ENCODE measurements at regions of chr3 and their contacts with region 1.

Region 1: DNA sequence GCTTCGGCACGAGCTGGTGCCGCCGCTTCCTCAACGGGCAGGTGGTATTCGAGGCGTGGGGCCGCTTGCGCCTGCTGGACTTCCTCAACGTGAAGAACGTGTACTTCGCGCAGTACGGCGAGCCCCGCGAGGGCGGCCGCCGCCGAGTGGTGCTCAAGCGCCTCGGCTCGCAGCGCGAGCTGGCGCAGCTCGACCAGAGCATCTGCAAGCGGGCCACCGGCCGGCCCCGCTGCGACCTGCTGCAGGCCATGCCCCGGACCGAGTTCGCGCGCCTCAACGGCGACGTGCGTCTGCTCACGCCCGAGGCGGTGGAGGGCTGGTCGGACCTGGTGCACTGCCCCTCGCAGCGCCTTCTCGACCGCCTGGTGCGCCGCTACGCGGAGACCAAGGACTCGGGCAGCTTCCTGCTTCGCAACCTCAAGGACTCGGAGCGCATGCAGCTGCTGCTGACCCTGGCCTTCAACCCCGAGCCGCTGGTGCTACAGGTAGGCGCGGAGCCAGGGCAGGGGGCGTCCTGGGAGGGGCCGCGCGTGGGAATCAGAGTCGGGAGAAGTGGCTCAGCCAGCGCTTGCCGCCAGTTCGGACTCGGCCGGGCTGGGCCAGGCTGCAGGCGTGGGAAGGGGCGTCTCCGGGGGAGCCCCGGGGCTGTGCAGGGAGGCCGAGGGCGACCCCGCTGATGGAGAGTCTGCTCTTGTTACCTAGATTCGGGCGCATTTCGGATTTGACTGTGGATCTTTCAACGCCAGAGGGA is 1.1 kb downstream of the DIPK2A start:
- DNase-seq: peak in 13 of 14 experiments; percentile 22 to 90 (median 53)
- ATAC-seq: no peak
- H3K4me3 ChIP-seq: peak overlapping the region; percentile 90
- H3K4me3 Mint-ChIP-seq: peak overlapping the region; percentile 97
- H3K27ac ChIP-seq: peak overlapping the region; percentile 76 to 79
- H3K27ac Mint-ChIP-seq: peak overlapping the region; percentile 91
- H3K4me1 ChIP-seq: peaks cover 11% of the 10 kb centered on the region
- H3K4me1 Mint-ChIP-seq: peaks cover 52% of the 10 kb centered on the region
- H3K27me3 ChIP-seq: peaks cover 0 to 3% of the 10 kb centered on the region in 2 experiments
- H3K27me3 Mint-ChIP-seq: no peaks in the 10 kb centered on the region
- CTCF ChIP-seq: peak; percentile 63

Region 2: DNA sequence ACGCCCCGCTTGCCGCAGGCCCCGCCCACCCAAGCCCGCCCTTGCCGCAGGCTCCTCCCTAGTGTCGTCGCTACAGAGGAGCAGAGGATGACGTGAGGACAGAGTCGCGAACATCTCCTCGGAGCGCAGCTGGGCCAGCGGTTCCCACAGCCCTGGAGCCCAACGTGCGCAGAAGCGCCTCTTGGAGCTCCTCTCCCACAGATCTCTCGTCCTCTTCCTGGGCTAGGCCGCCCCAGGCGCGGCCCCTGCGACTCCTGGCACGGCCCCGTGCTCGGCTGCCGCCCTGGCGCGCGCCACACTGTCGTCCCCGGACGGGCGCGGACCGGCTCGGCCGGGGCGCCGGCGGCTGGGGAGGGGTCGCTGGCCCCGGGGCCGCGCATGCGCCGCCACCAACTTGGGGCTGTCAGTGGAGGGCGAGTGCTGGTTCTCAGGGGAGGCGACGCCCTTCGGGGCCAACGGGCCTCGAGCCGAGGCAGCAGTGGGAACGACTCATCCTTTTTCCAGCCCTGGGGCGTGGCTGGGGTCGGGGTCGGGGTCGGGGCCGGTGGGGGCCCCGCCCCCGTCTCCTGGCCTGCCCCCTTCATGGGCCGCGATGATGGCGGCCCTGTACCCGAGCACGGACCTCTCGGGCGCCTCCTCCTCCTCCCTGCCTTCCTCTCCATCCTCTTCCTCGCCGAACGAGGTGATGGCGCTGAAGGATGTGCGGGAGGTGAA is 1248.6 kb before region 1 on chr3 and contains the start of gene TRPC1:
- CTCF ChIA-PET with region 1: interaction called, 5 read pairs
- POLR2A ChIA-PET with region 1: interaction called, 10 read pairs
- intact Hi-C with region 1: loop called (anchors 5 kb)
- DNase-seq: peak in 13 of 14 experiments; percentile 55 to 95 (median 71)
- ATAC-seq: peak; percentile 94
- H3K4me3 ChIP-seq: peak within 1 kb of the TSS; percentile 70
- H3K4me3 Mint-ChIP-seq: peak within 1 kb of the TSS; percentile 93
- H3K27ac ChIP-seq: no peak within 1 kb of the TSS
- H3K27ac Mint-ChIP-seq: peak within 1 kb of the TSS; percentile 85
- H3K4me1 ChIP-seq: peaks cover 12% of the 10 kb centered on the region
- H3K4me1 Mint-ChIP-seq: peaks cover 36% of the 10 kb centered on the region
- H3K27me3 ChIP-seq: no peaks in the 10 kb centered on the region
- H3K27me3 Mint-ChIP-seq: peaks cover 25% of the 10 kb centered on the region
- CTCF ChIP-seq: no peak
- total RNA-seq, gene TRPC1: 3.1 to 4.2 TPM

Region 3: GRCh38 chr3:143192193-143192592 is 780.5 kb before region 1 on chr3:
- CTCF ChIA-PET with region 1: no interaction called
- POLR2A ChIA-PET with region 1: no interaction called
- intact Hi-C with region 1: no loop called
- DNase-seq: no peak
- ATAC-seq: peak; percentile 34
- H3K4me3 ChIP-seq: no peak overlapping the region
- H3K4me3 Mint-ChIP-seq: peak overlapping the region; percentile 17
- H3K27ac ChIP-seq: no peak overlapping the region
- H3K27ac Mint-ChIP-seq: peak overlapping the region; percentile 51
- H3K4me1 ChIP-seq: no peaks in the 10 kb centered on the region
- H3K4me1 Mint-ChIP-seq: no peaks in the 10 kb centered on the region
- H3K27me3 ChIP-seq: no peaks in the 10 kb centered on the region
- H3K27me3 Mint-ChIP-seq: no peaks in the 10 kb centered on the region
- CTCF ChIP-seq: no peak

Region 4: GRCh38 chr3:143613226-143613625 is 359.5 kb before region 1 on chr3:
- CTCF ChIA-PET with region 1: no interaction called
- POLR2A ChIA-PET with region 1: no interaction called
- intact Hi-C with region 1: no loop called
- DNase-seq: no peak
- ATAC-seq: no peak
- H3K4me3 ChIP-seq: no peak overlapping the region
- H3K4me3 Mint-ChIP-seq: no peak overlapping the region
- H3K27ac ChIP-seq: no peak overlapping the region
- H3K27ac Mint-ChIP-seq: no peak overlapping the region
- H3K4me1 ChIP-seq: no peaks in the 10 kb centered on the region
- H3K4me1 Mint-ChIP-seq: no peaks in the 10 kb centered on the region
- H3K27me3 ChIP-seq: no peaks in the 10 kb centered on the region
- H3K27me3 Mint-ChIP-seq: no peaks in the 10 kb centered on the region
- CTCF ChIP-seq: no peak

Region 5: GRCh38 chr3:143751643-143752178 is 221.0 kb before region 1 on chr3:
- CTCF ChIA-PET with region 1: no interaction called
- POLR2A ChIA-PET with region 1: interaction called, 31 read pairs
- intact Hi-C with region 1: no loop called
- DNase-seq: peak; percentile 7 to 69 (median 26)
- ATAC-seq: peak; percentile 88
- H3K4me3 ChIP-seq: peak overlapping the region; percentile 2
- H3K4me3 Mint-ChIP-seq: peak overlapping the region; percentile 52
- H3K27ac ChIP-seq: peak overlapping the region; percentile 29 to 70
- H3K27ac Mint-ChIP-seq: peak overlapping the region; percentile 93
- H3K4me1 ChIP-seq: peaks cover 33% of the 10 kb centered on the region
- H3K4me1 Mint-ChIP-seq: peaks cover 70% of the 10 kb centered on the region
- H3K27me3 ChIP-seq: no peaks in the 10 kb centered on the region
- H3K27me3 Mint-ChIP-seq: no peaks in the 10 kb centered on the region
- CTCF ChIP-seq: no peak

Region 6: DNA sequence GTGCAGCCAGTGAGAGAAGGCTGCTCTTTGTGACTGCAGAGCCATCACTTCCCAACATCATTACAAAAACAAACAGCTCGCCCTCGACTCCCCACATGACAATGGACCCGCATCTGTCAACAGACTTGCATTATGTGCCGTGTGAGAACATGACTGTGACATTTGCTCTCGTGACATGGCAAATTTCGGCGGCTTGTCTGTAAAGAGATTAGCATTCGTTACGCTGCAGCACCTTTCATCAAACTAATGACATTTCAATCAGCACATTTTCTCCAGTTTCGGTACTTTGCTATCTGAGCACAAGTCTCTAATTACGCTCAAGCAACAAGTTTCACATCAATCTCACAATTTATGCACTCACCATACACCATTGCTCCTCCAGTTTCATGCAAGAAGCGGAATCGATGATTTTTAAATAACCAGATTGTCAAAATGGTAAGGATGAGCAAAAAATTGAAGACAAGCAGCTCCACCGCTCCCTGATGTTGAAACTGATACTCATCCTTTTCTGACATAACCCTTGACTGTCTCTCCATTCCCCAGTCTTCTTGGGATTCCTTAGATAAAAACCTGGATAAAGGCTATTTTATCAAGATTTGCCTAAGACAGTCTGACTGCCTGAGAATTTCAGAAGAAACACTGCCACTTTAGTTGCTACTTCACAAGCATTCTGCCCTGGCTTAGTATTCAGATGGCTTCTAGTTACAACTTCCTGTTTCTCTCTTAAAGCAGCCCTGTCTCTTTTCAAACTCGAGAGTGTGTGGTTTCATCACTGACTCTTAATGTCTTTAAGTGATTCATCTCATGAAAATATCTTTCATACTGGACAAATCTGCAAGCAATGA is 124.7 kb before region 1 on chr3 and contains the start of gene SLC9A9:
- CTCF ChIA-PET with region 1: no interaction called
- POLR2A ChIA-PET with region 1: interaction called, 45 read pairs
- intact Hi-C with region 1: loop called (anchors 5 kb)
- DNase-seq: peak in 12 of 14 experiments; percentile 1 to 68 (median 15)
- ATAC-seq: peak; percentile 84
- H3K4me3 ChIP-seq: peak within 1 kb of the TSS; percentile 71
- H3K4me3 Mint-ChIP-seq: peak within 1 kb of the TSS; percentile 99
- H3K27ac ChIP-seq: peak within 1 kb of the TSS; percentile 6 to 65
- H3K27ac Mint-ChIP-seq: peak within 1 kb of the TSS; percentile 91
- H3K4me1 ChIP-seq: peaks cover 10% of the 10 kb centered on the region
- H3K4me1 Mint-ChIP-seq: peaks cover 71% of the 10 kb centered on the region
- H3K27me3 ChIP-seq: no peaks in the 10 kb centered on the region
- H3K27me3 Mint-ChIP-seq: no peaks in the 10 kb centered on the region
- CTCF ChIP-seq: no peak
- total RNA-seq, gene SLC9A9: 12.2 TPM

Region 7: GRCh38 chr3:144197582-144197981 is 224.9 kb after region 1 on chr3:
- CTCF ChIA-PET with region 1: no interaction called
- POLR2A ChIA-PET with region 1: no interaction called
- intact Hi-C with region 1: no loop called
- DNase-seq: no peak
- ATAC-seq: no peak
- H3K4me3 ChIP-seq: no peak overlapping the region
- H3K4me3 Mint-ChIP-seq: no peak overlapping the region
- H3K27ac ChIP-seq: no peak overlapping the region
- H3K27ac Mint-ChIP-seq: no peak overlapping the region
- H3K4me1 ChIP-seq: no peaks in the 10 kb centered on the region
- H3K4me1 Mint-ChIP-seq: no peaks in the 10 kb centered on the region
- H3K27me3 ChIP-seq: no peaks in the 10 kb centered on the region
- H3K27me3 Mint-ChIP-seq: no peaks in the 10 kb centered on the region
- CTCF ChIP-seq: no peak

Region 8: GRCh38 chr3:145022447-145022846 is 1049.8 kb after region 1 on chr3:
- CTCF ChIA-PET with region 1: no interaction called
- POLR2A ChIA-PET with region 1: no interaction called
- intact Hi-C with region 1: no loop called
- DNase-seq: no peak
- ATAC-seq: no peak
- H3K4me3 ChIP-seq: no peak overlapping the region
- H3K4me3 Mint-ChIP-seq: no peak overlapping the region
- H3K27ac ChIP-seq: no peak overlapping the region
- H3K27ac Mint-ChIP-seq: no peak overlapping the region
- H3K4me1 ChIP-seq: no peaks in the 10 kb centered on the region
- H3K4me1 Mint-ChIP-seq: no peaks in the 10 kb centered on the region
- H3K27me3 ChIP-seq: no peaks in the 10 kb centered on the region
- H3K27me3 Mint-ChIP-seq: no peaks in the 10 kb centered on the region
- CTCF ChIP-seq: no peak

Measured in CD4-positive, alpha-beta T cell (primary cell).